Activated CD8-positive, alpha-beta T cell treated with anti-CD3 and anti-CD28 coated beads for 36 hours (primary cell): ENCODE measurements at regions of chr6 and their contacts with region 1.

Region 1: GRCh38 chr6:106141441-106142237 is 55.5 kb downstream of the PRDM1 start:
- DNase-seq: peak; percentile 96
- ATAC-seq: peak; percentile 89
- H3K4me3 Mint-ChIP-seq: peak overlapping the region; percentile 20
- H3K27ac Mint-ChIP-seq: peak overlapping the region; percentile 96
- H3K4me1 Mint-ChIP-seq: peaks cover 64% of the 10 kb centered on the region
- H3K27me3 Mint-ChIP-seq: peaks cover 2% of the 10 kb centered on the region
- CTCF ChIP-seq: no peak

Region 2: DNA sequence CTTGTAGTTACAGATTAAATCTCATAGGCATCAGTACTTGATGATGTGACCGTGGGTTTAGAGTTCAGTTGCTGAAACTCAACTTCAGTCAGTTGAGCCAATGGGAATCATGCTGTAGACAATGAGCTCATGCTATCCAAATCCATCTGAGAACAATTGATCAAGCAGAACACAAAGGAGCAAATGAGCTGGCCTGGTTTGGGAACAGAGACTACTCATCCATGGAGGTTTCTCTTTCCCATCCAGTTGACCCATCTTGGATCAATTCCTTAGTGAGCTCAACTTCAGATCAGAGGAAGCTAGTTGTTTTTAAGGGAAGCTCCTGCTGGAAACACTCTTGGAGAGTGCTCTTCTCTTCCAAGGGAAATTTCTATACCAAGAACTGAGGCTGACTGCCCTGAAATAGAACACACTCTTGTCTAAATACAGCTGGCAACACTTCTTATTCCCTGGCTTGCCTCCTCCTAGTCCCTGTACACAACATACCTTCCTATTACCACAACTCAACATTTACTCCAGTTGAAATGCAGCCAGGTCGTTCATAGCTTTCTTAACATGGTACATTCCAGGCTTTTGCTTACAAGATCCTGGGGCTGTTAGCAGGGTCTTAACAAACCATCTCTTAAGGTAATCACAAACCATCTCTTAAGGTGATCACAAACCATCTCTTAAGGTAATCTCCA is 259.4 kb before region 1 on chr6:
- CTCF ChIA-PET with region 1: no interaction called
- POLR2A ChIA-PET with region 1: no interaction called
- intact Hi-C with region 1: no loop called
- DNase-seq: no peak
- ATAC-seq: no peak
- H3K4me3 Mint-ChIP-seq: no peak overlapping the region
- H3K27ac Mint-ChIP-seq: no peak overlapping the region
- H3K4me1 Mint-ChIP-seq: peaks cover 17% of the 10 kb centered on the region
- H3K27me3 Mint-ChIP-seq: peaks cover 37% of the 10 kb centered on the region
- CTCF ChIP-seq: no peak

Region 3: GRCh38 chr6:106187424-106187982 is 45.9 kb after region 1 on chr6:
- CTCF ChIA-PET with region 1: interaction called, 3 read pairs
- POLR2A ChIA-PET with region 1: interaction called, 8 read pairs
- intact Hi-C with region 1: loop called (anchors 2 kb)
- DNase-seq: no peak
- ATAC-seq: peak; percentile 32
- H3K4me3 Mint-ChIP-seq: peak overlapping the region; percentile 18
- H3K27ac Mint-ChIP-seq: peak overlapping the region; percentile 91
- H3K4me1 Mint-ChIP-seq: peaks cover 63% of the 10 kb centered on the region
- H3K27me3 Mint-ChIP-seq: no peaks in the 10 kb centered on the region
- CTCF ChIP-seq: no peak